Activated CD8-positive, alpha-beta T cell treated with anti-CD3 and anti-CD28 coated beads for 36 hours (primary cell): ENCODE measurements at regions of chr15 and their contacts with region 1.

Region 1: DNA sequence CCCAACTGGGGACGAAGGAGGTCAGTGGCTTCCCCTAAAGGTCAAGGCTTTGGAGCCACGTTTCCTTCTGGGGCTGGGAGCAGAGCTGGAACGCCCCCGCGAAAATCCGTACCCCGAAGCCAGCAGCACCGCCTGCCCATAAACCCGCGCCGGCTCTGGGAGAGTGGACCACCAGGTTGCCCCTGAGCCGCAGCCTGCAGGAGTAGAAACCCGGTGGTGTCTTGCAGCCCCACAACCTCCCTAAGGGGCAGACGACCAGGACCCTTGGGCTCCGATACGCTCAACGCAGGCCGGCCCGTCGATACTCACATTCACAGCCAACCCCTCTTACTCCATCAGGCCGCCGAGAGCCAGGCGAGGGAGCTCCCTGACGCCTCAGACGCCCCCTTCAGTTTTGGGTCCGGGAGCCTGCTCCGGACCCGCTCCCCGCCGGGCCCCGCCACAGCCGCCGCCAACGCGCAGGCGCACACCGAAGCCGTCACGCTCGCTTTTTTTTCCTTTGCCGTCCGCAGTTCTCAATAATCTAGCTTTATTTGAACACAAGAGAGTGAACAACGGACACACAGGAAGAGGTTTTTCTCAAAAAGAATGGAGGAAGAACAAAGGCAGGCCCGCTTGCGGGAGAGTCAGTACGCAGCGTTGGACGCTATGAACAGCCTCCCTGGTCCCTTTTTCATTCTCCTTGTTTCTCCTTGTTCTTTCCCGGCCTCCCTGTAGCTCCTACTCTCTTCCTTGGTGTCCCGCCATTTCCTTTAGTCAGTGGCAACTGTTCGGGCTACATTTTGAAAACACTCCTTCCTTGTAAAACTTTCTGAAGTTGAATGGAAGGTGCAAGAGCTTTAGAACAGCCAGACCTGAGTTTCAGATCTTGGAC is at the start of gene ZNF106:
- DNase-seq: peak; percentile 85
- ATAC-seq: peak; percentile 69
- H3K4me3 Mint-ChIP-seq: peak within 1 kb of the TSS; percentile 92
- H3K27ac Mint-ChIP-seq: peak within 1 kb of the TSS; percentile 98
- H3K4me1 Mint-ChIP-seq: peaks cover 40% of the 10 kb centered on the region
- H3K27me3 Mint-ChIP-seq: no peaks in the 10 kb centered on the region
- CTCF ChIP-seq: no peak
- total RNA-seq, gene ZNF106: 46.4 to 46.6 TPM

Region 2: DNA sequence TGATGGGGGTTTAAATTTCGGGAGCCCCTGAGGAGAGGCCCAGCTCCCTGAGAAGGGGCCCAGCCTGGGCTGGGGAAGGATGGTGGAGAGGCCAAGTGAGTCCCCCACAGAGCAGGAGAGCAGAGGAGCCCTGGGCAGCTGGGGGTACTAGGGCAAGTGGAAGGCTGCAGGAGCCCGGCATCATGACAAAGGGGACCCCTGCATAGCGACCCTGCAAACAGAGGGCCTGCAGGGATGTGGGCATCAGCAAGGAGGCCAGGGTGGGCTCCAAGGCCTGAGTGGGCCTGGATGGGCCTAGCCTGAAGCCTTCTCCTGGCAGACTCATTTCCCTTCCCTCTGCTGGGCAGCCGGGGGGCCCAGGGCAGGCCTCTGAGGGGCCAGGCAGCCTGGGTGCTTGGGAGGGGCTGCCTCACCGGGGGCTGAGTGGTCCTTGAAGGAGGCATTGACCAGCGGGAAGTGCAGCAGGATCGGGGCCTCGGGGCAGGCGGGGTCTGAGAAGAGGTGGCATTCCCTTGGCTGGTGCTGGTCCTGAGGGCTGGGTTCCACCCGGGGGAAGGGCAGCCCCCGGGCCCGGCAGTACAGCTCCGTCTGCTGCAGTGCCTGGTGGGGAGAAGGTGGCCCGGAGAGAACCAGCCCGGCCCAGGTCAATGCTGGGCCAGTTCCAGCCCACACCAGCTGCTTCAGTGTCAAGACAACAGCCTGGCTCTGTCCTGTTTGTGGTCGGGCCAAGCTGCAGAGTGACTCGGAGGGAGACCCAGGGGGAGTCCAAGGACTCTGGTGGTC is 421.2 kb before region 1 on chr15:
- CTCF ChIA-PET with region 1: no interaction called
- POLR2A ChIA-PET with region 1: no interaction called
- intact Hi-C with region 1: no loop called
- DNase-seq: no peak
- ATAC-seq: no peak
- H3K4me3 Mint-ChIP-seq: no peak overlapping the region
- H3K27ac Mint-ChIP-seq: no peak overlapping the region
- H3K4me1 Mint-ChIP-seq: no peaks in the 10 kb centered on the region
- H3K27me3 Mint-ChIP-seq: peaks cover 9% of the 10 kb centered on the region
- CTCF ChIP-seq: no peak

Region 3: GRCh38 chr15:42392309-42393024 is 98.4 kb before region 1 on chr15:
- CTCF ChIA-PET with region 1: no interaction called
- POLR2A ChIA-PET with region 1: no interaction called
- intact Hi-C with region 1: no loop called
- DNase-seq: no peak
- ATAC-seq: no peak
- H3K4me3 Mint-ChIP-seq: no peak overlapping the region
- H3K27ac Mint-ChIP-seq: no peak overlapping the region
- H3K4me1 Mint-ChIP-seq: no peaks in the 10 kb centered on the region
- H3K27me3 Mint-ChIP-seq: no peaks in the 10 kb centered on the region
- CTCF ChIP-seq: no peak

Region 4: GRCh38 chr15:42474827-42475226 is 16.1 kb before region 1 on chr15:
- CTCF ChIA-PET with region 1: interaction called, 6 read pairs
- POLR2A ChIA-PET with region 1: interaction called, 15 read pairs
- intact Hi-C with region 1: no loop called
- DNase-seq: no peak
- ATAC-seq: no peak
- H3K4me3 Mint-ChIP-seq: no peak overlapping the region
- H3K27ac Mint-ChIP-seq: no peak overlapping the region
- H3K4me1 Mint-ChIP-seq: peaks cover 4% of the 10 kb centered on the region
- H3K27me3 Mint-ChIP-seq: no peaks in the 10 kb centered on the region
- CTCF ChIP-seq: no peak

Region 5: DNA sequence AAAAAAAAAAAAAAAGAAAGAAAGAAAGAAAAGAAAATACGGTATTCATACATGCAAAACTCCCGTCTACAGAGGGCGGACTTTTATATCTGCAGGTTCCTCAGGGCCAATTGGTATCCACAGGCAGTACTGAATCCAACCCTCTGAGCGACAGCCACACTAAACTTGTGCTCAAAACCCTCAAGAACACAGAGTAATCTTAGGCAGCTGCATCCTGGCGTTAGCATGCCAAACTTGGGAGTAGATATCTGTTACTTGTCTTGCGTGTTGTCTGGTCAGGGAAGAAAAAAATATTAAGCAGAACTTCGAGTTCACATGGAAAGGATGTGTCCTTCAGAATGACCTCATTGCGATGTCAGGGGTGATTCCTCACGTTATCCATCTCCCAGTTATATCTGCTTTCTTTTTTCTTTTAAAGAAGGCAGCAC is 17.4 kb after region 1 on chr15:
- CTCF ChIA-PET with region 1: no interaction called
- POLR2A ChIA-PET with region 1: interaction called, 10 read pairs
- intact Hi-C with region 1: no loop called
- DNase-seq: no peak
- ATAC-seq: no peak
- H3K4me3 Mint-ChIP-seq: no peak overlapping the region
- H3K27ac Mint-ChIP-seq: no peak overlapping the region
- H3K4me1 Mint-ChIP-seq: peaks cover 2% of the 10 kb centered on the region
- H3K27me3 Mint-ChIP-seq: no peaks in the 10 kb centered on the region
- CTCF ChIP-seq: no peak

Region 6: GRCh38 chr15:42548253-42549031 is 57.5 kb after region 1 on chr15 and contains the starts of genes HAUS2 and LRRC57:
- CTCF ChIA-PET with region 1: no interaction called
- POLR2A ChIA-PET with region 1: interaction called, 12 read pairs
- intact Hi-C with region 1: no loop called
- DNase-seq: peak; percentile 86
- ATAC-seq: peak; percentile 87
- H3K4me3 Mint-ChIP-seq: peak within 1 kb of the TSS; percentile 100
- H3K27ac Mint-ChIP-seq: peak within 1 kb of the TSS; percentile 99
- H3K4me1 Mint-ChIP-seq: peaks cover 43% of the 10 kb centered on the region
- H3K27me3 Mint-ChIP-seq: no peaks in the 10 kb centered on the region
- CTCF ChIP-seq: no peak
- total RNA-seq, gene HAUS2: 45.3 to 48.8 TPM
- total RNA-seq, gene LRRC57: 13.7 to 15.1 TPM

Region 7: GRCh38 chr15:42558739-42559138 is 67.8 kb after region 1 on chr15:
- CTCF ChIA-PET with region 1: no interaction called
- POLR2A ChIA-PET with region 1: no interaction called
- intact Hi-C with region 1: no loop called
- DNase-seq: no peak
- ATAC-seq: no peak
- H3K4me3 Mint-ChIP-seq: no peak overlapping the region
- H3K27ac Mint-ChIP-seq: no peak overlapping the region
- H3K4me1 Mint-ChIP-seq: peaks cover 6% of the 10 kb centered on the region
- H3K27me3 Mint-ChIP-seq: no peaks in the 10 kb centered on the region
- CTCF ChIP-seq: no peak

Region 8: DNA sequence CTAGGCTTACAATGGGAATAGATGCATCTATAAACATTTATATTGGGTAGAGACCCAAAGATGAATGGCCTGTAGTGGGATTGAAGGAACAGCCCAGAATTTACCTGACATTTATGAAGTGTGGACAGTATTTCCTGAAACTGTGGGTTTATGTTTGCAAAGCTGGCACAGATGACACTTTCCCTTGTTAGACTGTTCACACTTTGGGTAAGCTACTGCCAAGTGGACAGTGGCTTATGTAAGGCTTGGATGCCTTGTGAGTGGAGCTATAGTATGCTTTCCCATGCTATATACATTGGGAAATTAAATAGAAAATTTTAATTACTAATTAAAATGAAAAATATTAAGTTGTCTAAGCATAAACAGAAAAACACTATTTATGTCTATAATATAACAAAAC is 133.0 kb after region 1 on chr15:
- CTCF ChIA-PET with region 1: no interaction called
- POLR2A ChIA-PET with region 1: no interaction called
- intact Hi-C with region 1: no loop called
- DNase-seq: no peak
- ATAC-seq: no peak
- H3K4me3 Mint-ChIP-seq: no peak overlapping the region
- H3K27ac Mint-ChIP-seq: no peak overlapping the region
- H3K4me1 Mint-ChIP-seq: peaks cover 3% of the 10 kb centered on the region
- H3K27me3 Mint-ChIP-seq: no peaks in the 10 kb centered on the region
- CTCF ChIP-seq: no peak